ENCODE measurements at regions of chrX and their contacts with region 1.

Region 1: GRCh38 chrX:8748855-8749254 is 16.9 kb upstream of the ANOS1 start:
- DNase-seq: no peak

Region 2: DNA sequence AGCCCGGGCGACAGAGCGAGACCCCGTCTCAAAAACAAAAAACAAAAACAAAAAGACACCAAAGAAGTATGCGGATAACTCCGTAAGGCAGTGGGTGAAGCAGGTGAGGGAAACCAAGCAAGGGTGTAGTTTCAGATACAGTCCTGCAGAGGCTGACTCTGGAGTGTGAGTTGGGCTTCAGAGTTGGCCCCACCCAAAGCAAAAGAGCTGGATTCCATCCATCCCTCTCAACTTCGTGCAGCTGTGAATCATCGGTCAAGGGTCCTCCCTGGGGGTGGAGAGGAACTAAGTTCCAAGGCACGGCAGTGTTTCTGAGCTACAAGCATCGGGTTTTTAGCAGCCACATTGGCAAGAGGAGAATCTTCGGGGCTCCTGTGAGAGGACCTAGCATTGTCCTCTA is 96.2 kb after region 1 on chrX:
- intact Hi-C with region 1: loop called in 1 of 2 experiments (anchors 5 kb)
- DNase-seq: no peak